ENCODE measurements at regions of chr7 and their contacts with region 1.

Region 1: DNA sequence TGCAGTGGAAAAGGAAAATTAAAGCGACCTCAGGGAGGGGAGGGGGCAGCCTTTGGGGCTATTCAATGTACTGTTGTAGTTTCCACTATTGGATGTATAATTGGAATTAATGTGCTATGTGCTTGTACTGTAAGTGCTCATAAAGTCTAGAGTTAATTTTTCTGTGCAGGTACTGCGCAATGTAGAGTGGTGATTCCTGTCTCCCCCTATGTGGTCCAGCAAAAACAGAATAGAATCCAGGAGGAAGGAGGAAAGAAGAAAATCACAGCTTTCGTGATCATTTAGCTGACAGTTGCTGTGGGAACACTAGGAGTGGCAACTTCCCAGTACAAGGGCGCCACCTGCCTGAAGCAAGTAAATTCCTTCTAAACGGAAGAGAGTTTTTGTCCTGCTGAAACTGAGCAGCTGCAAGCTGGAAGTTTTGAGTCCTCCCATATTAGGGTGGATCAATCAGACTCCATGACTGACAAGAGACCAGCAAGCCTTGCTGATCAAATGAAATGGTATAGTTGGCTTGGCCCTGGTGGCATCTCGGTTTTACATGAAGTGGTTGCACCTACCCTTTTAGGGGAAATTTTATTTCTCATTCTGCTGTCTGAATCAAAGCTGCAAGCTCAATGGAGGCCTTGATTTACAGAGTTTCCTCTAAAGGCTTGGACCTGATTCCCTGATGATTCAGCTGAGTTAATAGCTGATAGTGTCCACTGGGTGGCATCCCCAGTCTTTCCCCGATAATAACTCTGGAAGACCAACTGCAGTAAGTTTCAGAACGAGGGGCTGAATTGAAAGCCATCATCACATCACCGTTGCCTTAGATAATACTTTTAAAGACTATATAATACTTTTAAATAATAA is 299.8 kb downstream of the HGF start:
- DNase-seq: peak; percentile 51
- H3K27ac ChIP-seq: no peak overlapping the region
- CTCF ChIP-seq: peak; percentile 88

Region 2: DNA sequence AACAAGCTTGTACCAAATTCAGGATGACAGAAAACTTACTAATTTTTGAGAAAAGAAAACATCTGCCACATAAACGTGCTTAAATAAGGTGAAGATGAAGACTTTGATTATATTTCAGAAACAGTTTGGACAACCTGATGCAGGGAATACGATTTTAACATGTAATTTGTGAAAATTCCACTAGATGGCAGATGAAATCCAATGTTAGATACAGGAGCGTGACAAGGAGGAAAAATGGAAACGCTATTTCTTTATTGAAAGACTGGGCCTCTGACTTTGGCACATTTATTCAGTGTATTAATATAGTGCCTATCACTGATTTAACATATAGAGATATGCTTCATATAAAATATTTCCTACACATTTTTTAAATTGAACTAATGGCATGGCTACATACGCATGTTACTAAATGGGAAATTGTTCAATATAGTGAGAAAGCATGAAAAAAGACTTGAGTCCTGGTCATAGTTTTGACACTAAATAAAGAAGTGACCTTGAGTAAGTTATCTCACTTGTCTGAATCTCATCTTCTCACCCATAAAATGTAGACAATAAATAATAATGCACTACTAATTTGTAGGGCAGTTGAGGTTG is 771.0 kb before region 1 on chr7:
- CTCF ChIA-PET with region 1: interaction called, 11 read pairs
- POLR2A ChIA-PET with region 1: no interaction called
- DNase-seq: peak; percentile 36
- H3K27ac ChIP-seq: no peak overlapping the region
- CTCF ChIP-seq: peak; percentile 69

Region 3: DNA sequence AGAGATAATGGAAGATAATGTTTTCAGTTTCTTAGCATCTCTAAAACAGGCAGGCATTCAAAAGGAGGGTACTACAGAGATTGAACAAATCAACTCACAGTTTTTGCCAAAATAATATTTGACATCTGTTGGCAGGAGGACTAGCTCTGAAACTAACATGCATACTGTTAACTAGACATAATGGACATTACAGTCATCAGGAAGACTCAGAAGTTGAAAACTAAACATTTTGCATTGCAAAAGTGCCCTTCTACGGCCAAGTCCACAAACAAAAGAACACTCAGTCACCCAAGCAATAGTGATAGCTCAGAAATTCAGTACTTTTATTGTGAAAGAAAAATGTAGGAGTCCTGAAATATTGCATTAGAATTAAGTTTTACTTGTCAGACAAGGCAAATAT is 99.3 kb before region 1 on chr7:
- CTCF ChIA-PET with region 1: no interaction called
- POLR2A ChIA-PET with region 1: no interaction called
- DNase-seq: no peak
- H3K27ac ChIP-seq: no peak overlapping the region
- CTCF ChIP-seq: no peak

Region 4: GRCh38 chr7:81457852-81458522 is 12.1 kb before region 1 on chr7:
- CTCF ChIA-PET with region 1: interaction called, 11 read pairs
- POLR2A ChIA-PET with region 1: no interaction called
- DNase-seq: peak; percentile 27
- H3K27ac ChIP-seq: no peak overlapping the region
- CTCF ChIP-seq: peak; percentile 71

Region 5: GRCh38 chr7:81562581-81562980 is 92.5 kb after region 1 on chr7:
- CTCF ChIA-PET with region 1: no interaction called
- POLR2A ChIA-PET with region 1: no interaction called
- DNase-seq: no peak
- H3K27ac ChIP-seq: no peak overlapping the region
- CTCF ChIP-seq: no peak

Region 6: GRCh38 chr7:82036146-82036886 is 566.2 kb after region 1 on chr7:
- CTCF ChIA-PET with region 1: no interaction called
- POLR2A ChIA-PET with region 1: no interaction called
- DNase-seq: no peak
- H3K27ac ChIP-seq: no peak overlapping the region
- CTCF ChIP-seq: no peak

Measured in RWPE1 (cell line).